Vagina (tissue), 2 donors: ENCODE measurements at regions of chrX and their contacts with region 1.

Region 1: GRCh38 chrX:119999087-119999634 is 55.6 kb upstream of the NKAP start:
- DNase-seq: no peak
- H3K4me3 ChIP-seq: no peak overlapping the region
- H3K27ac ChIP-seq: no peak overlapping the region
- H3K4me1 ChIP-seq: peaks cover 13% of the 10 kb centered on the region
- H3K27me3 ChIP-seq: no peaks in the 10 kb centered on the region
- CTCF ChIP-seq: no peak
- POLR2A ChIP-seq: no peak

Region 2: GRCh38 chrX:119636419-119636818 is 362.7 kb before region 1 on chrX:
- intact Hi-C with region 1: no loop called
- DNase-seq: no peak
- H3K4me3 ChIP-seq: no peak overlapping the region
- H3K27ac ChIP-seq: no peak overlapping the region
- H3K4me1 ChIP-seq: no peaks in the 10 kb centered on the region
- H3K27me3 ChIP-seq: no peaks in the 10 kb centered on the region
- CTCF ChIP-seq: no peak
- POLR2A ChIP-seq: no peak

Region 3: DNA sequence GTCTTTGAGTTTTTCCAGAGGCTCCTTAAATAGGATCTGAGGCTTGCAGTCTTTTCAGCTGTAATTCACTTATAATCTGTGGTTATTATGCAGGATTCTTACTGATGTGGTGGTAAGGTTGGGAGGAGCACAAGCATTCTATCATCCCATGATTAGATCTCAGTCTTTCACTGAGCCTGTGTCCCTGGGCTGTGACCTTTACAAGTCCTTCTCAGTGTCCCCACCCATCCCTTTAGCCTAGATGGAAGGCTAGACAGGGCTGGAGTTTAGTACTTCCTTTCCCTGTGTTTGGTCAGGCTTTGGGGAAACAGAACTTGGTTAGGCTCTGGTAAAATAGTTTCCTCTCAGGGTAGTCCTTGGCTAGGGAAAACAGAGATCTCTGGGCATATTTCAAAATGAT is 38.5 kb before region 1 on chrX:
- intact Hi-C with region 1: loop called (anchors 2 kb)
- DNase-seq: no peak
- H3K4me3 ChIP-seq: no peak overlapping the region
- H3K27ac ChIP-seq: no peak overlapping the region
- H3K4me1 ChIP-seq: no peaks in the 10 kb centered on the region
- H3K27me3 ChIP-seq: no peaks in the 10 kb centered on the region
- CTCF ChIP-seq: no peak
- POLR2A ChIP-seq: no peak

Region 4: DNA sequence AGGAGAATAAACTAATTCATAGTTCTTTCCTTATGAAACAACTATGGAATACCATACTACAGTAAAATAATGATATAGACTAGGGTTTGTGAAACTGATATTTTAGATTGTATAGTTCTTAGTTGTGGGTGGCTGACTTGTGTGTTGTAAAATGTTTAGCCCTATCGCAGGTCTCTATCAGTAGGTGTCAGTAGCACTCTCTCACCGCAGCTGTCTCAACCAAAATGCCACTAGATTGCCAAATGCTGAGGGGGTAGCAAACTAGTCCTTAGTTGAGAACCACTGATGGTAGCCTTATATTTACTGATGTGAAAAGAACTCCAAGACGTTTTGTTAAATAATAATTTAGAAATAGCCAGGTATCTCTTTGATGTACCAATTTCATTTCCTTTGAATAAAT is 30.2 kb after region 1 on chrX:
- intact Hi-C with region 1: no loop called
- DNase-seq: no peak
- H3K4me3 ChIP-seq: no peak overlapping the region
- H3K27ac ChIP-seq: no peak overlapping the region
- H3K4me1 ChIP-seq: no peaks in the 10 kb centered on the region
- H3K27me3 ChIP-seq: no peaks in the 10 kb centered on the region
- CTCF ChIP-seq: no peak
- POLR2A ChIP-seq: no peak